ENCODE measurements at regions of chr5 and their contacts with region 1.

Region 1: DNA sequence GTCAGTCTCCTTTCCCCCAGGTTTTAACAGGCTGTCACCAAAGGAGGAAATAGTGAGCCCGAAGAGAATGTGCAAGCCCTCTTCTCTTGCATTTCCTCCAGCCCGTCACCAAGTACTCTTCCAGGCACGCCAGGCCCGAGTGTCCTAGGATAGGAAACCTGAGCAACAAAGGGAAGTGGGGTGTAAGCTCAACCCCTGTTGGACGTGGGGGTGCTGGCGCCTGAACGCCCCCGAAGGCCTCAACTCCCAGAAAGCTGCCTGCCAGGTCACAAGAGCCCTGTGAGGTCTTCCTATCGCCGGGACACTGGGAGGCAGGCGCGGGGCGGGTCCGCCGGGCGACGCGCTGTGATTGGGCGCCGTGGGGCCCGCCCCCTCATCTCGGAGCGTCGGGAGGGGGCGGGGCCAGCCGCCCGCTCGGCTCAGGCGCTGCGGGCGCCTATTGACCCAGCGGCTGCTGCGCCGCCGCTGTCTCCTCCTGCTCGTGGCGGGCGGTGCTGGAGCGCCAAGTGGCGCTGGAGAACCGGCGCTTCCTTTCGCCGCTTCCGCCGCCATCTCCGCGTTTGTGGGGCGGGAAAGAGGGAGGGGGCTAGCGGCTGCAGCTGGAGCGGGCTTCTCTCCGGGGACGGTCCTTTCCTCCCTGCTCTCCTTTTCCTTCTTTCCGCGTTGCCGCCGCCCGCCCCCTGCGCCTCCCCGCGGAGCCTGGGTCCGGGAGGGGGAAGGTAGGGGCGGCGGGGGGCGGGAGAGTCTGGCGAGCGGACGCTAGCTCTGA is 572 bp upstream of the MAN2A1 start:
- DNase-seq: peak; percentile 77
- H3K4me3 Mint-ChIP-seq: peak overlapping the region; percentile 98
- H3K27ac Mint-ChIP-seq: peak overlapping the region; percentile 94
- H3K4me1 Mint-ChIP-seq: peaks cover 46% of the 10 kb centered on the region
- H3K27me3 Mint-ChIP-seq: no peaks in the 10 kb centered on the region

Region 2: DNA sequence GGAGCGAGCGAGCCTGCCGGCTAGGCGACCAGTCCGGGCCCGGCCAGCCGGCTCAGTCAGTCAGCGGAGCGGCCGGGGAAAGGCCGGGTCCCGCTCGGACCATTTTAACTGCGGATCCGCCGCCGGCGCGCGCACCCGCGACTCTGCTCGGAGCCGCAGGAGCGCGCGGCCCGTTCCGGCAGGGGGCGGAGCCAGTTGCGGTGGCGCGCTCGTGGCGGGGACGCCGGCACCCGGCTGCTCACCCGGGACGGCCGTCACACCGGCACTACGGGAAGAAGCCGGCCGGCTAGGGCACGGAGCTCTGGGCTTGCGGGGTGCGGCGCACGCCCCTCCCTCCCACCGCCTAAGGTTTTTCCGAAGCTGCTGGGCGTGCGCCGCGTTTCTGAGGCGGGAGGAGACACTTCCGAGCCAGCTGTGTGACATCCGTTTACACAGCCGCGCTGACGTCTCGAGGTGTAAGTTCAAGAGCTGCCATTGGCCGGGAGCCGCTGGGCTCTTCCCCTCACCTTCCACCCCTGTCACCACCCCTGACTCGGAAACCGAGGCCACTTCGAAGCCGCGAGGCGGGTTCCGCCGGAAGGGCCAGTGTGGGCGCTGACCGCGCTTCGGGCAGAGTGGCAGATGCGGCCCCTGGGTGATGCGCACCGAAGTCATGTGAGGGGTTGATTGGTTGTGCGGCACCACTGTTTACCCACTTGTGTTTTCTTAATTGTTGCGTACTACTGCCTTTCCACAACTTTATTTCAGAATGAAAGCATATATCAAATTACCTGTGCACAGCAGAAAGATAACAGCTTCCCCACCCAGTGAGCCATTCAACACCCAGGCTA is 1307.0 kb before region 1 on chr5 and contains the start of gene FBXL17:
- intact Hi-C with region 1: loop called (anchors 2 kb)
- DNase-seq: peak; percentile 89
- H3K4me3 Mint-ChIP-seq: peak within 1 kb of the TSS; percentile 83
- H3K27ac Mint-ChIP-seq: peak within 1 kb of the TSS; percentile 84
- H3K4me1 Mint-ChIP-seq: peaks cover 34% of the 10 kb centered on the region
- H3K27me3 Mint-ChIP-seq: peaks cover 1% of the 10 kb centered on the region
- total RNA-seq, gene FBXL17: 8.2 and 12.2 TPM in 2 replicates

Region 3: DNA sequence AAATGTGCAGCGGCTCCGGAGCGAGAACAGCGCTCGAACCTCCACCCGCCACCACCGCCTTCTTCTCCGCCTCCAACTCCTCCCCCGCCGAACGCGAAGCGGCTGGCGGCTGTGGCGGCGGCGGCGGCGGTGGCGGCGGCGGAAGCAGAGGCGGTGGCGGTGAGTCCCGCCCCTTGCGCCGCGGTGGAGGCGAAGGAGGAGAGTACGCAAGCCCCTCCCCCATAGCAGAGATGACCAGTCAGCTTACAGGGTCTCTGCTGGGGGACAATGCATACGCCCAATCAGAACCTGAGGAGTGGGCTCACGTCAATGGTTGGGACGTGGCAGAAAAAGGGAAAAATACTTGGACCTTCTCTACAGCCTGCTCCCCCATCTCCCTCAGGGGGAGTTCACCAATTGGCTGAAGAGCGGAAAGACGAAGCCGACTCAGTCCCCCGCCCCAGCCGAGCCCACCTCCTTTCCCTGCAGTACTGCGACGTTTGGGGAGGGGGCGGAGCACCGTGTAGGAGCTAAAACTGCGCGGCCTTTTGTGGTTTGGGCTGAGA is 279.2 kb before region 1 on chr5 and contains the start of gene PJA2:
- intact Hi-C with region 1: loop called (anchors 1 kb)
- DNase-seq: peak; percentile 96
- H3K4me3 Mint-ChIP-seq: peak within 1 kb of the TSS; percentile 92
- H3K27ac Mint-ChIP-seq: peak within 1 kb of the TSS; percentile 97
- H3K4me1 Mint-ChIP-seq: peaks cover 57% of the 10 kb centered on the region
- H3K27me3 Mint-ChIP-seq: no peaks in the 10 kb centered on the region
- total RNA-seq, gene PJA2: 40.2 and 41.4 TPM in 2 replicates

Region 4: DNA sequence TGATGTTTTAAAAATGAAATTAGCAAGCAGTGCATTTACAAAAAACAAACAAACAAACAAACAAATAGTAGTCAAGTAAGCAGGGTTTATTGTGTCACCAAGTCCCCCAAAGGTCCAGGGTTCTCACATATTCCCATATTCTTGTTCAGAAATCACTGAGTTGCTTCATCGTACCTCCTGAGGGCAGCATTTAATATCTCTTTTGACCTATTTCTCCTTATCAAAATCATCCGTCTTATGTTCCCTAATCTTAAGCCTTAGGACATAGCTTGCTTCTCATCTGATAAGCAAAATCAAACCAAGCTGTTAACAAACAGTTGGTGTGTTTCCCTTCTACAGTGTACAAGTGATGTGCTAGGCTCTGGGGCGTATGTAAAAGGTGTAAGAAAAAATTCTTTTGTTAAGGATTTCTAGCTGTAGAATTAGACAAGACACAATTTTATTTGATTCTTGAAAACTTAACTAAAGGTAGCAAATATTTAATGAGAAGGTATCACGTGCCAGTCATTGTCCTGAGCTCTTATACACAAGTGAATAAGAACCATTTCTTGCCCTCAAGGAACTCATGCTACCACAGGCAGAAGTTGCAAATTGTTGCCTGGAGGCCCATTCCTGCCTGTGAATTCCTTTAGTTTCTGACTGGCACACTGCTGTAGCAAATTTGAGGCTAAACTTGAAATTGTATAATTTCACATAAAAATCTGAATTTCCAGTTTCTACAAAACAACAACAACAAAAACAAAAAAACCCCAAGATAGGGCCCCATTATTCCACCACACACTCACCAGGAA is 108.7 kb before region 1 on chr5:
- intact Hi-C with region 1: no loop called
- DNase-seq: no peak
- H3K4me3 Mint-ChIP-seq: no peak overlapping the region
- H3K27ac Mint-ChIP-seq: no peak overlapping the region
- H3K4me1 Mint-ChIP-seq: no peaks in the 10 kb centered on the region
- H3K27me3 Mint-ChIP-seq: peaks cover 4% of the 10 kb centered on the region

Region 5: DNA sequence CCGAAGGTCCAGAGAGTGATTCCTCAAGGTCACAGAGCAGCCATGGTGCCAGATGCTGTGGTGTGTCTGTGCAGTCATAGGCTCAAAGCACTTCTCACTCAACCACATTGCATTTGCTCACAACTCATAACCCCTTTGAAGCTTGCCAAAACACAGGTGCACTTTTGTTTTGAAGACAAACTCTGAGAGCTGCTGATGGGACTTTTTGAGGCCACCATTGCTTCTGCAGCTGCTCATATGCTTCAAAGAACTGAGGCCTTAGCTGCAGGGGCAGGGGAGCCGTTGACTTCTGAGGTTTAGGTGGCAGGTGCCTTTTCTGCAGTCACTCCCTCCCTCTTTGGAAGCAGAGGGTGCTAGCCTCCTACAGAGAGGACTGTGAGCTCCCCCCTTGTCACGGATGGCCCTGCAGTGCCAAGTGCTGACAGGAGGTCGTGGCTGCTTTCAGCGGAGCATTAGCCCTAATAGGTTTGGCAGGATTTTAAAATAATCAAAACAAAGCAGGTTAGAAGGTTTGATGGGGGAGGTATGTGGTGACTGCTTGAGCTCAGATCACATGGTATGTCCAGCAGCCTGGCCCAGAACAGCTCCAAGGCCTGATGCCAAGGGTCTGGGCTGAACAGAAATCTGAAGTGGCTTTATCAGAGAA is 232.7 kb after region 1 on chr5:
- intact Hi-C with region 1: loop called (anchors 1 kb)
- DNase-seq: peak; percentile 61
- H3K4me3 Mint-ChIP-seq: peak overlapping the region; percentile 74
- H3K27ac Mint-ChIP-seq: peak overlapping the region; percentile 95
- H3K4me1 Mint-ChIP-seq: peaks cover 39% of the 10 kb centered on the region
- H3K27me3 Mint-ChIP-seq: no peaks in the 10 kb centered on the region

Region 6: DNA sequence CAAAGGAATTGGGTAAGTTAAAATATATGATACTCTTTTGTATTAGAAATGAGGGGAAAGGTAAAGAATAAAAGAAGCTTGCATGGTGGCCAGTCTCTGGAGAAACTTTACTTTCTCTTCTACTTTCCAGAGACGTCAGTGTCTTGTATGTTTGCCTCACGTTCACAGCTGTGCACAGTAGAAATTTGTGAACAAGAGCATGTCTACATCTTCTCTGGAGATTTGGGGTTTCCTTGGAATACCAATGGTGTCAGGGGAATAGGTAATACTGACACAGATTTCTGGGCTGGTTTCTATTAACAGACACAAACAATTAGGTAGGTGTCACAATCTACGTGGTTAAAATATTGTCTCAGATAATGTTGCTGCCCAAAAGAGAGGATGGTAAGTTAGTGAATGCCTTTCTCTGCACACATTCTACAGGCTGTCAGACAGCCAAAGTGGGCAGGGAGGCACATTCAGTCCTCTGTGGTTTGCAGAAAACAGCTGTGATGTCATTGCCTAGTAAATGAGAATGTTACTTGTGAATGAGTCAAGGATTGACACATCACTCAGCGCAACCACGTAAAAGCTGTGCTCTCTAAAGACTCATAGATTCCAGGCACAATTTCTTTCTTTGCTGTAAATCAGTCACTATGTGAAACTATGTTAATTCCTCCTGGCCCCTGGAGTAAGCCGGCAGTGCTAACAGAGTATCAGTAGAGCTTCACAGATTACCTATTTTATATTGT is 397.7 kb after region 1 on chr5:
- intact Hi-C with region 1: loop called (anchors 1 kb)
- DNase-seq: peak; percentile 43
- H3K4me3 Mint-ChIP-seq: peak overlapping the region; percentile 53
- H3K27ac Mint-ChIP-seq: peak overlapping the region; percentile 87
- H3K4me1 Mint-ChIP-seq: peaks cover 45% of the 10 kb centered on the region
- H3K27me3 Mint-ChIP-seq: no peaks in the 10 kb centered on the region

Region 7: GRCh38 chr5:110625376-110625999 is 936.3 kb after region 1 on chr5:
- intact Hi-C with region 1: loop called (anchors 1 kb)
- DNase-seq: no peak
- H3K4me3 Mint-ChIP-seq: no peak overlapping the region
- H3K27ac Mint-ChIP-seq: no peak overlapping the region
- H3K4me1 Mint-ChIP-seq: no peaks in the 10 kb centered on the region
- H3K27me3 Mint-ChIP-seq: no peaks in the 10 kb centered on the region

Region 8: DNA sequence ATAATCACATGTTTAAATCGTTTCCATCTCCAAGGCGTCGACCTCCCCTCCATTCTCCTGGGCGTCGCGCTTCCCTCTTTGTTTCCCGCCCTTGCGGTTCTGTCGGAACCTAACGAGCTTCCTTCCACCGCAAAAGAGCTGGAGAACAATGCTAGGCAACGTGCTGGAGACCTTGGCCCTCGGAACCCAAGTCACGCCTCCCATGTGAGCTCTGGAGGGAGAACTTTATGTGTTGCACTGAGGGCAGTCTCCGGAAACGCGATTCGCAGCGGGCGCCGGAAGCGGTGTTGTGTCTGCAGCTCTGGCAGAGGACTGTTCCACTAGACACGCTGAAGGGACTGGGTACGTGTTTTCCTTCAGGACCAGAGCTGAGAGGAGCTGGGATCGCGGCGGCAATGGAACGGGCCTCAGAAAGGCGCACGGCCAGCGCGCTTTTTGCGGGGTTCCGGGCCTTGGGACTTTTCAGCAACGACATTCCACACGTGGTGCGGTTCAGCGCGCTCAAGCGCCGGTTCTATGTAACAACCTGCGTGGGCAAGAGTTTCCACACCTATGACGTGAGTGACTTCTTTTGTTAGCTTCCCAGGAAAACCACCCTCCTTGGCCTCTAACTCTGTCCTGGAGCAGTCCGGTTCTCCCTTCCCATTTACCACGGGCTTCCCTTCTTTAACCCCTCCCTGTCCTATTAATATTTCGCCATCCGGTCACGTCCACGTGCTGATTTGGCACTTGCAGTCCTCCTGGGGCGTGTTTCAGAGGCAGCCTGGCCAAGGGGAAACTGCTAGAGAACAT is 1403.1 kb after region 1 on chr5 and contains the start of gene WDR36:
- intact Hi-C with region 1: loop called (anchors 1 kb)
- DNase-seq: peak; percentile 83
- H3K4me3 Mint-ChIP-seq: peak within 1 kb of the TSS; percentile 98
- H3K27ac Mint-ChIP-seq: peak within 1 kb of the TSS; percentile 97
- H3K4me1 Mint-ChIP-seq: peaks cover 42% of the 10 kb centered on the region
- H3K27me3 Mint-ChIP-seq: peaks cover 2% of the 10 kb centered on the region
- total RNA-seq, gene WDR36: 82.5 and 85.7 TPM in 2 replicates